ENCODE measurements at regions of chr1 and their contacts with region 1.

Region 1: GRCh38 chr1:109193653-109194590 is 19.8 kb upstream of the SARS1 start:
- DNase-seq: peak; percentile 34 to 64 (median 62)
- H3K4me3 ChIP-seq: no peak overlapping the region
- H3K4me3 Mint-ChIP-seq: peak overlapping the region in 1 of 2 donors; percentile 15
- H3K27ac ChIP-seq: no peak overlapping the region
- H3K27ac Mint-ChIP-seq: peak overlapping the region in 2 of 7 donors; percentile 4 to 75
- H3K4me1 ChIP-seq: peaks cover 6 to 9% of the 10 kb centered on the region in 2 donors
- H3K4me1 Mint-ChIP-seq: peaks cover 16% of the 10 kb centered on the region
- H3K27me3 ChIP-seq: no peaks in the 10 kb centered on the region
- H3K27me3 Mint-ChIP-seq: peaks cover 10 to 18% (median 18%) of the 10 kb centered on the region in 3 donors
- CTCF ChIP-seq: peak; percentile 92

Region 2: DNA sequence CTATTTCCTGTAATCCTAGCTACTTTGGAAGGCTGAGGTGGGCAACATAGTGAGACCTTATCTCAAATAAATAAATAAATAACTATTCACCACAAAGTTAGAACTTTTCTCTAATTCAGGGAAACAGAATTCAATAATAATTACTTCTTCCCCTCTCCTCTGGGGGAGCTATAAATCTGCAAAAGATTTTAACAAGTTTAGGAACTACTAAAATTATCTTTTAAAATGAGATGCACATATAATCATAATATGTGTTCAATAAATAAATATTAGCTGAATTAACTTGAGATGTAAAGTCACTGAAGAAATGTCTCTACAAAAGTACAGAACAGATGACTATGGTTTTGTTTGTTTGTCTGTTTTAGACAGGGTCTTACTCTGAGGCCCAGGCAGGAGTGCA is 166.1 kb before region 1 on chr1:
- intact Hi-C with region 1: loop called in 1 of 2 experiments (anchors 10 kb)
- DNase-seq: no peak
- H3K4me3 ChIP-seq: no peak overlapping the region
- H3K4me3 Mint-ChIP-seq: no peak overlapping the region
- H3K27ac ChIP-seq: no peak overlapping the region
- H3K27ac Mint-ChIP-seq: no peak overlapping the region
- H3K4me1 ChIP-seq: no peaks in the 10 kb centered on the region
- H3K4me1 Mint-ChIP-seq: no peaks in the 10 kb centered on the region
- H3K27me3 ChIP-seq: no peaks in the 10 kb centered on the region
- H3K27me3 Mint-ChIP-seq: no peaks in the 10 kb centered on the region
- CTCF ChIP-seq: peak; percentile 62

Measured in CD14-positive monocyte (primary cell).